ENCODE measurements at regions of chr17 and their contacts with region 1.

Region 1: GRCh38 chr17:50094753-50095619 is at the start of gene PDK2:
- DNase-seq: peak; percentile 97
- ATAC-seq: peak; percentile 96
- H3K4me3 Mint-ChIP-seq: peak within 1 kb of the TSS; percentile 86
- H3K27ac Mint-ChIP-seq: peak within 1 kb of the TSS; percentile 87
- H3K4me1 Mint-ChIP-seq: peaks cover 27% of the 10 kb centered on the region
- H3K27me3 Mint-ChIP-seq: peaks cover 2% of the 10 kb centered on the region
- total RNA-seq, gene PDK2: 18.1 to 21.2 TPM

Region 2: DNA sequence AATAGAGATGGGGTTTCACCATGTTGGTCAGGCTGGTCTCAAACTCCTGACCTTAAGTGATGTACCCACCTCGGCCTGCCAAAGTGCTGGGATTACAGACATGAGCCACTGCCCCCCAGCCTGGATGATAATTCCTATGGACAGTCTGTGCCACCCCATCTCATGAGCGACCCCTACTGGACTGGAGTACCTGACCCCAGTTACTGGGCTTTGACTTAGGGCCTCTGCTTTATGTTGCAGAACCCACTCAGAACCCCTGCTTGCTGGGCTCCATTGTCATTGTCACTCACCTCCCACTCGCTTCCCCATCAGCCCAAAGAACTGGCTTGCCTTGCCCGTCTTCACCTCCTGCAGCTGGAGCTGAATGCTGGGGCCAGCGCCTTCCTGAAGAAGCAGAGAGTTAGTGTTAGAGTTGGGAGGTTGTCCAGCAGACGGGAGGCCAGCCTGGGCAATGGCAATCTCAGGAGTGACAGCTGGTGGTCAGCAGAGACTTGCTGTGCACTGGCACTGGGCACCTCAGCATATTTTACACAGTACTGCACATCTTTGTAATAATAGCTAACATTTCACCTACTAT is 251.1 kb before region 1 on chr17:
- CTCF ChIA-PET with region 1: no interaction called
- POLR2A ChIA-PET with region 1: no interaction called
- DNase-seq: peak; percentile 38
- ATAC-seq: no peak
- H3K4me3 Mint-ChIP-seq: no peak overlapping the region
- H3K27ac Mint-ChIP-seq: peak overlapping the region; percentile 47
- H3K4me1 Mint-ChIP-seq: peaks cover 24% of the 10 kb centered on the region
- H3K27me3 Mint-ChIP-seq: no peaks in the 10 kb centered on the region

Region 3: DNA sequence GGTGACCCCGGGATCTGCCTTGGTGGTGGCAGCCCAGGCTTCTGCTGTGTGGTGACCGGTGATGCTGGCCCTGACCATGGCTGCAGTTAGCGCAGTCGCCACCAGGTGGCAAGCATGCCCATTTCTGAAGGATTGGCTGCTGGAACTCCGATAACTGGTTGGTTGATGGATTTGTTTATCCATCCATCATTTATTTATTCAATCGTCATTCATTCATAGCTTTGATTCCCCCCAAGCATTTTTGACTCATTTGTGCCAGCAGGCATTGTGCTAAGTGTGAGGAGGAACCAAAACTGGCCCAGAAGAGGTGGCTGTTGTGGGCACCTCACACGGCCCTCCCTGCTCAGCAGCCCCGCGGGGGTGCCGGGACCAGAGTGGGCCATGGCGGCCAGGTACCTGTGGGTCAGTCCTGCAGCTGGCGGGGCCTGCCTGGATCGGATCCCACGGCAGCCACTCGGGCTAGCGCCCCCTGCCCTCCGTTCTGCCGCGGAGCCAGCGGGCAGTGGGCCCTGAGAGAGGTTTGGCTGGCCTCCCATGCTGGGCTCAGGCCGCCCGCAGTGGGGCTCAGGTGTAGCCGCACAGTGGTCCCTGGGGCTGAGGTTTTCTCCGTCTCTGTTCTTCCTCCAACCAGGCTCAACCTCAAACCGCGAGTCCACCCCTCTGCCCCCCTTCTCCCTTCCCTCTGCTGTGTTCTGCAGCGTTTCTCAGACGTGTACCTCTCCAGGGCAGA is 67.9 kb before region 1 on chr17:
- CTCF ChIA-PET with region 1: interaction called, 59 read pairs
- POLR2A ChIA-PET with region 1: interaction called, 4 read pairs
- DNase-seq: peak; percentile 79
- ATAC-seq: peak; percentile 78
- H3K4me3 Mint-ChIP-seq: peak overlapping the region; percentile 38
- H3K27ac Mint-ChIP-seq: no peak overlapping the region
- H3K4me1 Mint-ChIP-seq: peaks cover 15% of the 10 kb centered on the region
- H3K27me3 Mint-ChIP-seq: peaks cover 19% of the 10 kb centered on the region

Region 4: DNA sequence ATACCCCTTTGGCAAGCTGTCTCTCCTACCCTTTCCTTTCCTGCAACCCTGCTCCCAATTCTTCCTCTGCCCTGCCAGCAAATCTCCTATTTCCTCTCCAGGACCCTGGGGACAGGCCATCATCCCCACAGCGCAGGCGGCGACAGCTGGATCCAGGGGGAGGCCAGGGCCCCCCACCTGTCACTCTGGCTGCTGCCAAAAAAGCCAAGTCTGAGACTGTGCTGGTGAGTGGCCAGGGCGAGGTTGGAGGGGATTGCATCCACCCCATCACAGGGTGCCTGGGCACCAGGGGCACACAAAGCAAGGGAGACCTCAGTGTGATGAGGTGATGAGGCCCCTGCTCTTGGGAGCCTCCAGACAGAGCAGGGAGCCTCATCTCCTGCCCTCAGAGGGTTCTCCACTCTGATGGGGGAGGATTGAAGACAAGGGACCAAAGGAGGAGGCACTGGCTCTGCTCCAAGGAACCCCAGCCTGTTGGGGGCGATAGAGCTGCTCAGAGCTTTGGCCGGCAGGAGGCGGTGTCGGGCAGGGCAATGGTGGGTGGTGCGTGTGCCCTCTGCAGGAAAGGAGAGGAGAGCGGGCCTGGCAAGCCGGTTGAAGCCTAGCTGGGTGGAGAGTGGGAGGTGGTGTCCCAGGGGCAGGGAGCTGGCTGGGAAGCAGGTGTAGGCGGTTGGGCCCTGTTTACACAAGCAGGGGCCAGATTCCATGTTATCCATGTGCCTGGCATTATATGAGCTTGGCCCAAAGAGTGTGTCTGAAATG is 15.5 kb before region 1 on chr17:
- CTCF ChIA-PET with region 1: interaction called, 16 read pairs
- POLR2A ChIA-PET with region 1: no interaction called
- DNase-seq: no peak
- ATAC-seq: no peak
- H3K4me3 Mint-ChIP-seq: no peak overlapping the region
- H3K27ac Mint-ChIP-seq: no peak overlapping the region
- H3K4me1 Mint-ChIP-seq: no peaks in the 10 kb centered on the region
- H3K27me3 Mint-ChIP-seq: no peaks in the 10 kb centered on the region

Region 5: GRCh38 chr17:50114849-50115357 is 19.9 kb after region 1 on chr17:
- CTCF ChIA-PET with region 1: interaction called, 115 read pairs
- POLR2A ChIA-PET with region 1: interaction called, 3 read pairs
- DNase-seq: peak; percentile 73
- ATAC-seq: peak; percentile 46
- H3K4me3 Mint-ChIP-seq: no peak overlapping the region
- H3K27ac Mint-ChIP-seq: no peak overlapping the region
- H3K4me1 Mint-ChIP-seq: peaks cover 11% of the 10 kb centered on the region
- H3K27me3 Mint-ChIP-seq: peaks cover 40% of the 10 kb centered on the region

Region 6: DNA sequence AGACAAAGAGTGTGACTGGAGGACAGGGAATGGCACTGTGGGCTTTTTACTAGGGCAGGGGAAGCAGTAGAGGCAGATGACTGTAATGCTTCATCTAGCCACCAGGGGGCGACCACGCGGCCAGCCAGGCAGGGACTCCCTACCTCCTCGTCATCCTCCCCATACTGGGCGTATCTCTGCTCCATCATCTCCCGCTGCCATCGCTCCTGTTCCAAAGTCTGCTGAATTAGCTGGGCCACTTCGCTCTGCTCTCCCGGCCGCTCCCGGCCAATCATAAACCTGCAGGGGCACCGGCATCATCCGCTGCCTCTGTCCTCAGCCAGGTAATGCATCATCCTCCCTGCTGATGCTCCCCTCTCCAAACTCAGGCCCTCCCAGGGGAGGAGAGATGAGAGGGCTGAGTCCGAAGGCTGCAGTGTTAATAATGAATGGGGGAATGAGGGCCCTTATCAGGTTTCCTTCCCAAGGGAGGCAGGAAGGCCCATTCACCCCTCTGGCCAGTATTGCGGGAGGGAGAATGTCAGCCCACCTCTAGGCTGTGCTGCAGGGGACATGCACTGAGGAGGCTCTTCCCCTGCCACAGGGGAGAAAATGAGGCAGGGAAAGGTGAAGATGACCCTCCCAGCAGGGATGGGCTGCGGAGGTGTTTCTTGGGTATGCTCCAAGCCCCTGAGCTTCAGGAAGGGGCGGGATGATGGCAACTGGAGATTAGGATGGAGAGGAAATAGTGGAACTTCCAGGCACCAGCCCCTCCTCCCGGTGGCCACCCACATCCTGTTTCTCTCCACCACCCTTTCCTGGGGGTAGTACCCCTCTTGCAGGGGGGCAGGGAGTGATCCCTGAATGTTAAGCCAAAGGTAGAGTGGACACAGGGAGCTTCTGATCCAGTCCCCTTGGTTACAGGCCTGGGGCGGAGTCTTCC is 45.2 kb after region 1 on chr17:
- CTCF ChIA-PET with region 1: interaction called, 14 read pairs
- POLR2A ChIA-PET with region 1: no interaction called
- DNase-seq: peak; percentile 88
- ATAC-seq: peak; percentile 90
- H3K4me3 Mint-ChIP-seq: peak overlapping the region; percentile 62
- H3K27ac Mint-ChIP-seq: peak overlapping the region; percentile 90
- H3K4me1 Mint-ChIP-seq: peaks cover 62% of the 10 kb centered on the region
- H3K27me3 Mint-ChIP-seq: no peaks in the 10 kb centered on the region

Region 7: GRCh38 chr17:50161023-50161910 is 66.3 kb after region 1 on chr17:
- CTCF ChIA-PET with region 1: interaction called, 32 read pairs
- POLR2A ChIA-PET with region 1: no interaction called
- DNase-seq: peak; percentile 96
- ATAC-seq: peak; percentile 97
- H3K4me3 Mint-ChIP-seq: peak overlapping the region; percentile 75
- H3K27ac Mint-ChIP-seq: peak overlapping the region; percentile 88
- H3K4me1 Mint-ChIP-seq: peaks cover 49% of the 10 kb centered on the region
- H3K27me3 Mint-ChIP-seq: peaks cover 7% of the 10 kb centered on the region

Region 8: DNA sequence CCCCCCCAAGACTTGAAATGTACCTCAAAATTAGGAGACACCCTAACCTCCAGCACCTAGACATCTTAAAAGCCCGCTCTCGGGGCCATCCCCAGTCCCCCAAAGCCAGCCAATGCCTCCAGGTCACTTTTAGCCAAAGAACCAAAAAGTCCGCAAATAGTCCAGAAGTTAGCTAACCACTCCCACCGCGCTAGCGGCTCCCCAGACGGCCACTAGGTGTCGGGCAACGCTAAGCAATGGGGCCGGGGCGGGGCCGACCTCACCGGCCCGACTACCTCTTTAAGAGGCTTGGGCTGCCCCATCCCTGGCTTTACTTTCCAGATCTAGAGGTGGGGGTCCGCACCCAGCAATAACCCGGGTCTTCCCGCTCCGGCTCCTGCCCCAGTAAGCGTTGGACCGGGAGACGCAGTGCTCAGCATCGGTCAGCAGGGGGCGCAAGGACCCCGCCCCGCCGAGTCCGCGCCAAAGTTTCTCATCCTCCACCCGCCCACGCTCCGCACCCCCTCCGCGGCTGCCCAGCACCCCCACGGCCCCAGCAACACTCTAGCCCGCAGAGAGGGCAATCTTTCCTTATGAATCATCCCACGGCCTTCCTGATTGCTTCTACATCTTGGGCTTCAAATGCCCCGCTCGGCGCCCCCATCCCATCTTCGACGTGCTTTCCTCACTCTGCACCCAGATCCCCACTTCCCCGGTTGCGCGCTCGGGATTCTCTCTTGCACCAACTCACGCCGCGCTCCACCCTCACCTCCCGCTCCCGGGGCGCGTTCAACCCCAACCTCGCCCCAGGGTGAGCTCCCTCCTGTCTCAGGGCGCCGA is 105.7 kb after region 1 on chr17:
- CTCF ChIA-PET with region 1: interaction called, 15 read pairs
- POLR2A ChIA-PET with region 1: no interaction called
- DNase-seq: peak; percentile 88
- ATAC-seq: peak; percentile 82
- H3K4me3 Mint-ChIP-seq: peak overlapping the region; percentile 70
- H3K27ac Mint-ChIP-seq: no peak overlapping the region
- H3K4me1 Mint-ChIP-seq: peaks cover 20% of the 10 kb centered on the region
- H3K27me3 Mint-ChIP-seq: peaks cover 42% of the 10 kb centered on the region

Region 9: GRCh38 chr17:50318501-50319285 is 223.7 kb after region 1 on chr17:
- CTCF ChIA-PET with region 1: no interaction called
- POLR2A ChIA-PET with region 1: no interaction called
- DNase-seq: no peak
- ATAC-seq: no peak
- H3K4me3 Mint-ChIP-seq: no peak overlapping the region
- H3K27ac Mint-ChIP-seq: no peak overlapping the region
- H3K4me1 Mint-ChIP-seq: no peaks in the 10 kb centered on the region
- H3K27me3 Mint-ChIP-seq: peaks cover 3% of the 10 kb centered on the region